MCF 10A (cell line): ENCODE measurements at regions of chr11 and their contacts with region 1.

Region 1: DNA sequence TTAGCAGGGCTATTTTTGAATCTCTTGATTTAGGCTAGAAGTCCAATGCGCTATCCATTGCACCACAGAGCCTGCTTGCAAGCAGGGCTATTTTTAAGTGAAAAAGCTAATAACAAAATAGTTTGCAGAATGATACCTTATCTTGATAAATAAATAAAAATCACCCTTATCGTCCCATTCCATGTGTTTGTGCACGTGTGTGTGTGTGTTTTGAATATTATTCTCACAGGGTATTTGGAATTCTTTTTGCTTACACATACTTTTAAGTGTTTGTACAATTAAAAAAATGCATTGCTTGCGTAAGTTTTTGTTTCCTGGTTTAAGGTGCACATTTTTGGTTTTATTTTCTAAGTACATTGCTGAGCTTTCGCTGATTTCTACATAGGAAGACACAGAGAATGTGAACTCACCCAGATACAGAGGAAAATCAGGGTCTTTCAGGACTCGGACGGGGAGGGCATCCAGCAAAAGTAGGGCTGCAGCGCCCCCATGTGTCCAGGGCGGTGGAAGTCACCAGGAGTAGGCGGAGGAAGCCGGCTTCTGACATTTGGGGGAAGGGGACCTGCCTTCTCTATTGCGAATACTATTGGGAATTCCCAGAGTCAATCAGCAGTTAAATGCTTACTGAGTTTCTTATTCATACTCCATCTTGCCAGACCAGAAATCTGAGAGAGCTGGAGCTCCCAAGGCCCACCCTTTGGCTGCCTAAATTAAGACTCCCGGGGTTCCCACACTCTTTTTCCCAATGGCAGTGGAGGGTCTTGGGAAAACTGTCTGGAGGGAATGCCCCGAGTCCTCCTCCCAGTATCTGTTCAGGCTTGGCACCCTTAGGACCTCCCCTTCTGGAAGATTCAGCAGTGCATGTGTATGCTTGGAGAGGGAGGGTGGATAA is 27.2 kb downstream of the SLC1A2 start:
- DNase-seq: peak; percentile 76
- H3K4me3 Mint-ChIP-seq: peak overlapping the region; percentile 62
- H3K27ac Mint-ChIP-seq: no peak overlapping the region
- H3K4me1 Mint-ChIP-seq: peaks cover 15% of the 10 kb centered on the region
- H3K27me3 Mint-ChIP-seq: no peaks in the 10 kb centered on the region
- CTCF ChIP-seq: peak; percentile 96

Region 2: GRCh38 chr11:34366522-34366921 is 1025.6 kb before region 1 on chr11:
- CTCF ChIA-PET with region 1: no interaction called
- POLR2A ChIA-PET with region 1: no interaction called
- intact Hi-C with region 1: loop called (anchors 5 kb)
- DNase-seq: peak; percentile 62
- H3K4me3 Mint-ChIP-seq: no peak overlapping the region
- H3K27ac Mint-ChIP-seq: no peak overlapping the region
- H3K4me1 Mint-ChIP-seq: peaks cover 7% of the 10 kb centered on the region
- H3K27me3 Mint-ChIP-seq: no peaks in the 10 kb centered on the region
- CTCF ChIP-seq: peak; percentile 56

Region 3: DNA sequence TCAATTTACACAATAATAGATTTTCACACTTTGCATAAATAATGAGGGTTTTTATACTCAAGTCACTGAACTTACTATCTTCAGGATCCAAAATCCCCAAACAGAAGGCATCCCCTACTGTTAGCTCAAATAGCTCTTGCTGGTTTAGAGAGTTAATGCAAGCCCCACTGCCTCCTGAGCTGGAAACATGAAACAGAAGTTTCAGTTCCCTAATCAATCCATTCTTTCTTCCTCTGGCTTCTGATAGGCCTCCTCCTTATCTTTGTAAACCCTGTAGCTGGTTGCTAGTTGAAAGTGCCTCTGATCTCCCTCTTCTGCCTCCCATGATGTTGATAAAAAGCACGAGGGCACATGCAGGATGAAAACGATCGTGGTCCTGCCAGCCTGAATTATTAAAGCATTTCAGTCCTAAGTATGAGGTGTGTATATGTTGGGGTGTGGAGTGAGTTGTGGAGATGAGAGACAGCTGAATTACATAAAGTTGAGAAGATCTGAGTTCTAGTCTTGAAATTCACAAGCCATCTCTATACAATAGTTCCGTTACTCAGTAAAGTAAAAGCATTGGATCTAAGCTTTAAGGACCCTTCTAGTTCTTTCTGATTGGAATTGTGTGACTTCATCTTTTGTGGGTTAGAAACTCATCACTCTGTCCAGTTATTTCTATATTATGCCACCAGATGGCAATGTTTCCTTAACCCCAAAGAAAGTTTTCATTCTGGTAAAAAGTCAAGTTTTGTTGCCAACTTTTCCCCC is 806.3 kb before region 1 on chr11:
- CTCF ChIA-PET with region 1: interaction called, 19 read pairs
- POLR2A ChIA-PET with region 1: interaction called, 3 read pairs
- intact Hi-C with region 1: loop called (anchors 5 kb)
- DNase-seq: peak; percentile 69
- H3K4me3 Mint-ChIP-seq: no peak overlapping the region
- H3K27ac Mint-ChIP-seq: peak overlapping the region; percentile 83
- H3K4me1 Mint-ChIP-seq: peaks cover 23% of the 10 kb centered on the region
- H3K27me3 Mint-ChIP-seq: no peaks in the 10 kb centered on the region
- CTCF ChIP-seq: peak; percentile 66

Region 4: GRCh38 chr11:34926101-34926830 is 465.9 kb before region 1 on chr11:
- CTCF ChIA-PET with region 1: interaction called, 36 read pairs
- POLR2A ChIA-PET with region 1: interaction called, 13 read pairs
- intact Hi-C with region 1: loop called (anchors 1 kb)
- DNase-seq: peak; percentile 59
- H3K4me3 Mint-ChIP-seq: no peak overlapping the region
- H3K27ac Mint-ChIP-seq: no peak overlapping the region
- H3K4me1 Mint-ChIP-seq: peaks cover 34% of the 10 kb centered on the region
- H3K27me3 Mint-ChIP-seq: no peaks in the 10 kb centered on the region
- CTCF ChIP-seq: peak; percentile 68

Region 5: GRCh38 chr11:35006389-35007128 is 385.6 kb before region 1 on chr11:
- CTCF ChIA-PET with region 1: interaction called, 15 read pairs
- POLR2A ChIA-PET with region 1: interaction called, 4 read pairs
- intact Hi-C with region 1: no loop called
- DNase-seq: no peak
- H3K4me3 Mint-ChIP-seq: no peak overlapping the region
- H3K27ac Mint-ChIP-seq: no peak overlapping the region
- H3K4me1 Mint-ChIP-seq: peaks cover 20% of the 10 kb centered on the region
- H3K27me3 Mint-ChIP-seq: no peaks in the 10 kb centered on the region
- CTCF ChIP-seq: no peak

Region 6: GRCh38 chr11:35087648-35088047 is 304.5 kb before region 1 on chr11:
- CTCF ChIA-PET with region 1: no interaction called
- POLR2A ChIA-PET with region 1: no interaction called
- intact Hi-C with region 1: no loop called
- DNase-seq: no peak
- H3K4me3 Mint-ChIP-seq: no peak overlapping the region
- H3K27ac Mint-ChIP-seq: no peak overlapping the region
- H3K4me1 Mint-ChIP-seq: peaks cover 40% of the 10 kb centered on the region
- H3K27me3 Mint-ChIP-seq: no peaks in the 10 kb centered on the region
- CTCF ChIP-seq: no peak

Region 7: DNA sequence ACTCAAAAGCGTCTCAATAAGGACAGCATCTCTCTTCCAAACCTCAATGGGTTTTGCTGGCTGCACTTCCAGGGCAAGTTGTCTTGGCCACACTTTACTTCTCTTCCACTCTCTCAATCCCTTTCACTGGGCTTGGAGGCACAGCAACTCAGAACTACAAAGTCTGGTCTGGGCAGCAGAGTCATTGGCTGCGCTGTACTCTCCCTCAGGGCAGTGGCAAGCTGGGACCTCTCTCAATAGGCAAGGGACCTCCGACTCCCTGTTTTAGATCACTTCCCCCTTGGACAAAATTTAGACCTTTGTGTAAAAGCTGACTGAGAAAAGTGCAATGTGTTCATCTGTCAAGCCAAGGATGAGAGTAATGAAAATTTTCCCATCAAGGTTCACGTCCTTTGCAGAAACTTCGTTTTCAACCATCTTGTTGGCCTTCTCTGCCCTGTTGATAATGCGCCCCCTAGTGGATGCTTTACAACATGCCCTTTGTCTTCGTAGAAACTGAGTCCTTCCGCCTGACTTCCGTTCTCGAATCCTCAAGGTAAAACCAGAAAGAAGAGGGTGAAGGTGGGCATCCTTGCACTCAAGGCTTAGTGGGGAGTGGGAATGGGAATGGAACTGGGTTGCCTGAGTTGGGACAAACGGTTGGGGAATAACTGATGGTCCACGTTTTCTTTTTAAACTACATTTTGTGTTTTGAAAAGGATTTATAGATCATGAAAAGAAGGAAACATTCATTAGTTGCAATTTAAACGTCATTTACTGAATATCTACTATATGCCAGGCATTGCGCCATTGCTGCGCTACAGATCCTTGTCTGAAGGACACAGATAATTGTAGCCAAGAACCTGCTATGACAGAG is 154.1 kb before region 1 on chr11:
- CTCF ChIA-PET with region 1: interaction called, 5 read pairs
- POLR2A ChIA-PET with region 1: interaction called, 3 read pairs
- intact Hi-C with region 1: loop called (anchors 2 kb)
- DNase-seq: peak; percentile 83
- H3K4me3 Mint-ChIP-seq: no peak overlapping the region
- H3K27ac Mint-ChIP-seq: no peak overlapping the region
- H3K4me1 Mint-ChIP-seq: peaks cover 22% of the 10 kb centered on the region
- H3K27me3 Mint-ChIP-seq: no peaks in the 10 kb centered on the region
- CTCF ChIP-seq: peak; percentile 54

Region 8: GRCh38 chr11:35363854-35364780 is 28.1 kb before region 1 on chr11:
- CTCF ChIA-PET with region 1: interaction called, 12 read pairs
- POLR2A ChIA-PET with region 1: interaction called, 9 read pairs
- intact Hi-C with region 1: no loop called
- DNase-seq: peak; percentile 97
- H3K4me3 Mint-ChIP-seq: peak overlapping the region; percentile 20
- H3K27ac Mint-ChIP-seq: peak overlapping the region; percentile 64
- H3K4me1 Mint-ChIP-seq: peaks cover 47% of the 10 kb centered on the region
- H3K27me3 Mint-ChIP-seq: no peaks in the 10 kb centered on the region
- CTCF ChIP-seq: no peak

Region 9: GRCh38 chr11:35567737-35568465 is 175.7 kb after region 1 on chr11:
- CTCF ChIA-PET with region 1: no interaction called
- POLR2A ChIA-PET with region 1: no interaction called
- intact Hi-C with region 1: no loop called
- DNase-seq: peak; percentile 86
- H3K4me3 Mint-ChIP-seq: no peak overlapping the region
- H3K27ac Mint-ChIP-seq: peak overlapping the region; percentile 73
- H3K4me1 Mint-ChIP-seq: peaks cover 9% of the 10 kb centered on the region
- H3K27me3 Mint-ChIP-seq: no peaks in the 10 kb centered on the region
- CTCF ChIP-seq: no peak

Region 10: GRCh38 chr11:35907648-35908431 is 515.7 kb after region 1 on chr11:
- CTCF ChIA-PET with region 1: no interaction called
- POLR2A ChIA-PET with region 1: no interaction called
- intact Hi-C with region 1: no loop called
- DNase-seq: peak; percentile 95
- H3K4me3 Mint-ChIP-seq: peak overlapping the region; percentile 12
- H3K27ac Mint-ChIP-seq: peak overlapping the region; percentile 99
- H3K4me1 Mint-ChIP-seq: peaks cover 57% of the 10 kb centered on the region
- H3K27me3 Mint-ChIP-seq: no peaks in the 10 kb centered on the region
- CTCF ChIP-seq: no peak